Cardiac septum (tissue), 1 donor: ENCODE measurements at regions of chr13 and their contacts with region 1.

Region 1: DNA sequence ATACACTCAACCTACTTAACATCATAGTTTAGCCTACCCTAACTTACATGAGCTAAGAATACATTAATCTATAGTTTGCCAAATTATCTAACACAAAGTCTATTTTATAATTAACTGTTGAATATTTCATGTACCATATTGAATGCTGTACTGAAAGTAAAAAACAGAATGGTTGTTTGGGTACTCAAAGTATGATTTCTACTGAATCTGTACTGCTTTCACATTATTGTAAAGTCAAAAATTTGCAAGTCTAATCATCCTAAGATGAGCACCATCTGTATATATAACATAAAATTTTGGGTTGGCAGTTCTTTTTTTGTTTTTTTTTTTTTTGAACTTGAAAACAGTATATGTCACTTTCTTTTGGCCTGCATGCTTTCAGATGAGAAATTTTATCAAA is 1212.6 kb downstream of the SLITRK5 start:
- DNase-seq: no peak

Region 2: GRCh38 chr13:88895261-88895941 is 11.7 kb after region 1 on chr13:
- intact Hi-C with region 1: loop called (anchors 2 kb)
- DNase-seq: no peak